ENCODE measurements at regions of chr6 and their contacts with region 1.

Region 1: GRCh38 chr6:27479319-27480182 is 6.6 kb upstream of the ZNF184 start:
- DNase-seq: peak; percentile 87 to 93 (median 92)
- H3K4me3 ChIP-seq: peak overlapping the region; percentile 88 to 93
- H3K4me3 Mint-ChIP-seq: no peak overlapping the region
- H3K27ac ChIP-seq: peak overlapping the region; percentile 85
- H3K27ac Mint-ChIP-seq: no peak overlapping the region
- H3K4me1 ChIP-seq: peaks cover 17% of the 10 kb centered on the region
- H3K4me1 Mint-ChIP-seq: peaks cover 0 to 11% (median 5%) of the 10 kb centered on the region in 4 donors
- H3K27me3 ChIP-seq: no peaks in the 10 kb centered on the region
- H3K27me3 Mint-ChIP-seq: no peaks in the 10 kb centered on the region

Region 2: GRCh38 chr6:27161946-27162603 is 317.5 kb before region 1 on chr6:
- CTCF ChIA-PET with region 1: no interaction called
- POLR2A ChIA-PET with region 1: no interaction called
- intact Hi-C with region 1: no loop called
- DNase-seq: peak in 4 of 5 donors; percentile 53 to 54 (median 54)
- H3K4me3 ChIP-seq: no peak overlapping the region
- H3K4me3 Mint-ChIP-seq: no peak overlapping the region
- H3K27ac ChIP-seq: no peak overlapping the region
- H3K27ac Mint-ChIP-seq: peak overlapping the region in 3 of 7 donors; percentile 1 to 58 (median 32)
- H3K4me1 ChIP-seq: peaks cover 14% of the 10 kb centered on the region
- H3K4me1 Mint-ChIP-seq: peaks cover 9 to 20% (median 17%) of the 10 kb centered on the region in 4 donors
- H3K27me3 ChIP-seq: no peaks in the 10 kb centered on the region
- H3K27me3 Mint-ChIP-seq: peaks cover 0 to 4% of the 10 kb centered on the region in 2 donors

Region 3: DNA sequence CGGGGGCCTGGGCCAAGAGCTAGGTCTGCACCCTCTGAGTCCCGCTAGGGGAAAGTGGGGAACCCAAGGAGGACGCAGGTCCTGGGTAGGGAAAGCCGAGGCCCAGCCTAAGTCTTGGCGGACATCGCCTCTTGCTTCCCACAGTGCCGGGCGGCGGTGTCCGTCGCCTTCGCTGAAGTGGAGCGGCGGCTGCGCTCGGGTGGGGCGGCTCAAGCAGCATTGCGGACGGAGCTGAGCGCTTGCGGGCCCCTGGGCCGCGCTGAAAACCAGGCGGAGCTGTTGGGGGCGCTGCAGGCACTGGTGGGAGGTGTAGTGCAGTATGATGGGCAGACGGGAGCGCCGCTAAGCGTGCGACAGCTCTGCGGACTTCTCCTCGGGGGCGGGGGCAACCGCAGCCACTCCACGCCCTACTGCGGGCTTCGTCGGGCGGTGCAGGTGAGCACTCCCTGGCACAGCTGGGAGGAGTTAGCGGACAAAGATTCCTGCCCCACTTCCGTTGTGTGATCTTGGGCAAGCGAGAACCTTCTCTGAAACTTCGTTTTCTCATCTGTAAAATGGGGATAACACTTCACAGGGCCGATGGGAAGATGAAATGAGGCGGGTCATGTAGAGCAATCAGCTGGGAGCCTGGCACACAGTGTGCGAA is 227.8 kb before region 1 on chr6:
- CTCF ChIA-PET with region 1: no interaction called
- POLR2A ChIA-PET with region 1: interaction called, 10 read pairs
- intact Hi-C with region 1: no loop called
- DNase-seq: peak; percentile 59 to 74 (median 66)
- H3K4me3 ChIP-seq: peak overlapping the region in 1 of 2 donors; percentile 53
- H3K4me3 Mint-ChIP-seq: peak overlapping the region; percentile 75 to 92 (median 88)
- H3K27ac ChIP-seq: no peak overlapping the region
- H3K27ac Mint-ChIP-seq: peak overlapping the region; percentile 19 to 70 (median 48)
- H3K4me1 ChIP-seq: peaks cover 14% of the 10 kb centered on the region
- H3K4me1 Mint-ChIP-seq: peaks cover 4 to 16% (median 7%) of the 10 kb centered on the region in 4 donors
- H3K27me3 ChIP-seq: no peaks in the 10 kb centered on the region
- H3K27me3 Mint-ChIP-seq: peaks cover 16 to 42% of the 10 kb centered on the region in 2 donors

Region 4: GRCh38 chr6:27414996-27415395 is 64.6 kb before region 1 on chr6:
- CTCF ChIA-PET with region 1: no interaction called
- POLR2A ChIA-PET with region 1: no interaction called
- intact Hi-C with region 1: no loop called
- DNase-seq: no peak
- H3K4me3 ChIP-seq: no peak overlapping the region
- H3K4me3 Mint-ChIP-seq: no peak overlapping the region
- H3K27ac ChIP-seq: no peak overlapping the region
- H3K27ac Mint-ChIP-seq: no peak overlapping the region
- H3K4me1 ChIP-seq: no peaks in the 10 kb centered on the region
- H3K4me1 Mint-ChIP-seq: no peaks in the 10 kb centered on the region
- H3K27me3 ChIP-seq: no peaks in the 10 kb centered on the region
- H3K27me3 Mint-ChIP-seq: peaks cover 11 to 14% of the 10 kb centered on the region in 2 donors

Region 5: GRCh38 chr6:27495386-27496135 is 16.0 kb after region 1 on chr6:
- CTCF ChIA-PET with region 1: interaction called, 3 read pairs
- POLR2A ChIA-PET with region 1: interaction called, 14 read pairs
- intact Hi-C with region 1: no loop called
- DNase-seq: no peak
- H3K4me3 ChIP-seq: no peak overlapping the region
- H3K4me3 Mint-ChIP-seq: peak overlapping the region; percentile 47 to 79 (median 62)
- H3K27ac ChIP-seq: no peak overlapping the region
- H3K27ac Mint-ChIP-seq: peak overlapping the region in 3 of 7 donors; percentile 3 to 81 (median 48)
- H3K4me1 ChIP-seq: peaks cover 7% of the 10 kb centered on the region
- H3K4me1 Mint-ChIP-seq: peaks cover 10 to 19% (median 13%) of the 10 kb centered on the region in 4 donors
- H3K27me3 ChIP-seq: peaks cover 35% of the 10 kb centered on the region
- H3K27me3 Mint-ChIP-seq: peaks cover 31 to 37% of the 10 kb centered on the region in 2 donors

Region 6: GRCh38 chr6:27687154-27688013 is 207.8 kb after region 1 on chr6:
- CTCF ChIA-PET with region 1: no interaction called
- POLR2A ChIA-PET with region 1: interaction called, 16 read pairs
- intact Hi-C with region 1: loop called (anchors 1 kb)
- DNase-seq: peak; percentile 66 to 81 (median 71)
- H3K4me3 ChIP-seq: peak overlapping the region; percentile 98
- H3K4me3 Mint-ChIP-seq: peak overlapping the region; percentile 86 to 96 (median 92)
- H3K27ac ChIP-seq: peak overlapping the region; percentile 65
- H3K27ac Mint-ChIP-seq: peak overlapping the region; percentile 76 to 100 (median 94)
- H3K4me1 ChIP-seq: peaks cover 16% of the 10 kb centered on the region
- H3K4me1 Mint-ChIP-seq: peaks cover 16 to 26% (median 20%) of the 10 kb centered on the region in 4 donors
- H3K27me3 ChIP-seq: peaks cover under 1% of the 10 kb centered on the region
- H3K27me3 Mint-ChIP-seq: peaks cover 6 to 14% of the 10 kb centered on the region in 2 donors

Region 7: DNA sequence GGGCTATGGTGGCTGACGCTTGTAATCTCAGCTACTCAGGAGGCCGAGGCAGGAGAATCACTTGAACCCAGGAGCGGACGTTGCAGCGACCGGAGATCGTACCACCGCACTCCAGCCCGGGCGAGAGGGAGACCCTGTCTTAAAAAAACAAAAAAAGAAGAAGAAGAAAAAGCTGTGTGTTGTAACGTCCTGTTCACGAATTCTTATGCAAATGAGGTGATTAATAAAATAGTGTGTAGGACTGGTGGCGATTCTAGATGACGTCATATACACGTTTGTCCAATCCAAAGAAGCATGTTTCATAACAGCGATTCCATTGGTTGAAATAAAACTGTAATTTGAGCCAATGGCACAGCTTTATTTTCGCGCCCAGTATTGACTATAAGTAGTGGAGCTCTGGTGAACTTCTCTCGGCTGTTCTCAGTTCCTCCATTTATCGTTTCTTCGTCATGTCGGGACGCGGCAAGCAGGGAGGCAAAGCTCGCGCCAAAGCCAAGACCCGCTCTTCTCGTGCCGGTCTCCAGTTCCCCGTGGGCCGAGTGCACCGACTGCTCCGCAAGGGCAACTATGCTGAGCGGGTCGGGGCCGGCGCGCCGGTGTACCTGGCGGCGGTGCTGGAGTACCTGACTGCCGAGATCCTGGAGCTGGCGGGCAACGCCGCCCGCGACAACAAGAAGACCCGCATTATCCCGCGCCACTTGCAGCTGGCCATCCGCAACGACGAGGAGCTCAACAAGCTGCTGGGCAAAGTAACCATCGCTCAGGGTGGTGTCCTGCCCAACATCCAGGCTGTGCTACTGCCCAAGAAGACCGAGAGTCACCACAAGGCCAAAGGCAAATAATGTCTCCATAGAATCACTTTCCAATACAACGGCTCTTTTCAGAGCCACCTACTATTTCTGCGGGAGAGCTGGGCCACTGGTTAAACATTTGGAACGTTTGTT is 385.6 kb after region 1 on chr6:
- CTCF ChIA-PET with region 1: no interaction called
- POLR2A ChIA-PET with region 1: interaction called, 15 read pairs
- intact Hi-C with region 1: no loop called
- DNase-seq: peak; percentile 86 to 93 (median 91)
- H3K4me3 ChIP-seq: peak overlapping the region; percentile 33 to 69
- H3K4me3 Mint-ChIP-seq: peak overlapping the region; percentile 96 to 99 (median 99)
- H3K27ac ChIP-seq: peak overlapping the region; percentile 62
- H3K27ac Mint-ChIP-seq: peak overlapping the region; percentile 94 to 99 (median 98)
- H3K4me1 ChIP-seq: peaks cover 31% of the 10 kb centered on the region
- H3K4me1 Mint-ChIP-seq: peaks cover 18 to 46% (median 34%) of the 10 kb centered on the region in 4 donors
- H3K27me3 ChIP-seq: no peaks in the 10 kb centered on the region
- H3K27me3 Mint-ChIP-seq: no peaks in the 10 kb centered on the region

Measured in CD4-positive, alpha-beta memory T cell (primary cell).